ENCODE measurements at regions of chr16 and their contacts with region 1.

Region 1: DNA sequence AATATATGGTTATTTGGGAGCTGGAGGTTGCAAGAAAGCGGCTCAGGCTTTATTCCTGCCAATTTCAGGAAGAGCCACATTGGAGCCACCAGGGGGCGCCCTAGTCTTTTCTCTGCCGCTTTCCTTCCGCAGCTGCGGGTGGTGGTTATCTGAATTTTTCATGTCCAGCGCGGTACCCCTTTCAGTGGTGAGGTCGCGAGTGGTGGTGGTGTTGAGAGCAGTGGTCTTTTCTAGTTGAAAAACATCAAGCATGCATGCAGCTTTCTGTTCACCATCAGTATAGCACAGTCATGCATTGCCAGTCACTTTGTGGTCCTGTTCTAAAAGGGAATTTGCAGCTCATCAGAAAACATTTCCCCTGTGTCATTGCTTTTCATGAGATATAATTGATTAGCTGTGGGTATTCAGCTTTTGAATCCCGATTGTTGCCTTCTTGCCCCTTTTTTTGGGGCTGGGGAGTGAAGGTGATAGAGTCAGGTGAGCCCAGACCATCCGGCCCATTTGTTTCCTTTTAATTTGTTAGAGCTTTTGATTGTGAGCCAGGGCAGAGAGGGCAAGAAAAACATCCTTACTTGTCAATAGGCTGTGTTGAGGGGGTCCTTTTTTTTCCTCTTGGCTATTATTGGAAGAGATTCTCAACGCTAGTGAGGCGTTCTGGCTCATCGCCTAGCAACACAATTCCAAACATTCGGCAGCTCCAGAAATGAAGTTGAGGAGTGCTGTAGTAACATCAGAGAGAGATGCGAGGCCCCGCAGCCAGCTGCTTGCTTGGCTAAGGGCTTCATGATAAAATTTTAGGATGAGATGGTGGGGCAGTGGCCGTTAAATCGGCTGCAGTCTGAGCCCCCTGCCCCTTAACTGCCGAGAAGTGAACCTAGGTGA is 119.0 kb downstream of the SNX29 start:
- DNase-seq: peak; percentile 64
- H3K4me3 ChIP-seq: no peak overlapping the region
- H3K27ac ChIP-seq: no peak overlapping the region
- H3K4me1 ChIP-seq: peaks cover 19% of the 10 kb centered on the region
- H3K27me3 ChIP-seq: no peaks in the 10 kb centered on the region
- CTCF ChIP-seq: peak; percentile 76 to 87
- POLR2A ChIP-seq: no peak

Region 2: GRCh38 chr16:12002447-12003006 is 93.0 kb before region 1 on chr16:
- CTCF ChIA-PET with region 1: no interaction called
- POLR2A ChIA-PET with region 1: no interaction called
- dilution Hi-C with region 1: no loop called
- intact Hi-C with region 1: no loop called
- DNase-seq: no peak
- H3K4me3 ChIP-seq: no peak overlapping the region
- H3K27ac ChIP-seq: no peak overlapping the region
- H3K4me1 ChIP-seq: no peaks in the 10 kb centered on the region
- H3K27me3 ChIP-seq: no peaks in the 10 kb centered on the region
- CTCF ChIP-seq: no peak
- POLR2A ChIP-seq: no peak

Region 3: GRCh38 chr16:12079412-12079965 is 16.0 kb before region 1 on chr16:
- CTCF ChIA-PET with region 1: interaction called, 17 read pairs
- POLR2A ChIA-PET with region 1: no interaction called
- dilution Hi-C with region 1: no loop called
- intact Hi-C with region 1: no loop called
- DNase-seq: no peak
- H3K4me3 ChIP-seq: no peak overlapping the region
- H3K27ac ChIP-seq: no peak overlapping the region
- H3K4me1 ChIP-seq: peaks cover 8% of the 10 kb centered on the region
- H3K27me3 ChIP-seq: no peaks in the 10 kb centered on the region
- CTCF ChIP-seq: no peak
- POLR2A ChIP-seq: no peak

Region 4: GRCh38 chr16:12228602-12229499 is 133.3 kb after region 1 on chr16:
- CTCF ChIA-PET with region 1: interaction called, 29 read pairs
- POLR2A ChIA-PET with region 1: no interaction called
- dilution Hi-C with region 1: no loop called
- intact Hi-C with region 1: no loop called
- DNase-seq: peak; percentile 67
- H3K4me3 ChIP-seq: no peak overlapping the region
- H3K27ac ChIP-seq: no peak overlapping the region
- H3K4me1 ChIP-seq: no peaks in the 10 kb centered on the region
- H3K27me3 ChIP-seq: no peaks in the 10 kb centered on the region
- CTCF ChIP-seq: peak; percentile 64 to 93
- POLR2A ChIP-seq: no peak

Region 5: DNA sequence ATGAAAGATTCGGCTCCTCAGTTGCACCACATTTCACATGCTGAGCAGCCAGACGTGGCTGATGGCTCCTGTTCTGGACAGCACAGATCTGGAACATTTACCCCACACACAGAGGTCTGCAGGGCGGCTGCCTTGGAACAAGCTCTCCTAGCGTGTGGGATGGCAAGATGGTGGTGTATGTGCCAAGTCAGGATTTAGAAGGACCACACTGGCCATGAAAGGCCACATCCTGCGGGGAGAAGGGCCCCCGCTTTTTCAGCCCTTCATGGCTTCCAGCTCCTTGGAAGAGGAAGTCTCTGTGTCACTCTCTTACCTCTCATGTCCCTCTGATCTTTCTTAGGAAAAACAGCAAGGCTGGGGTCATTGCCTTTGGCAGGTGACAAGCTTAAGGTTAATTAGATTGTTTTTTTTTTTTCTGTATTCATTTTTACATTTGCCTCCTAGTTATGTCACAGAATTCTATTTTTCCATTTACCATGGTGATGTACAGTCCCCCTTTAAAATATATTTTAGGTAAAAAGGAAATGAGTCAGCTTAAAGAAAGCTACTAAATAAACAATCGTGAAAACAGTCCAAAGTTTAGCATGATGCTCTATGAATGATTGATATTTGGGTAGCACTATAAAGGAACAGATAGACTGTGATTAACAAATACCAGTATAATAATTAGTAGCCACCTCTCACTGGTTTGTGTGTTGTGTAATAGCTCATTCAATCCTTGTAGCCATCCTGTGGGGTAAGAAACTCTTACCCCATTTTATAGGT is 311.6 kb after region 1 on chr16:
- CTCF ChIA-PET with region 1: interaction called, 6 read pairs
- POLR2A ChIA-PET with region 1: no interaction called
- dilution Hi-C with region 1: no loop called
- intact Hi-C with region 1: loop called (anchors 2 kb)
- DNase-seq: peak; percentile 75
- H3K4me3 ChIP-seq: no peak overlapping the region
- H3K27ac ChIP-seq: peak overlapping the region; percentile 99
- H3K4me1 ChIP-seq: peaks cover 42% of the 10 kb centered on the region
- H3K27me3 ChIP-seq: no peaks in the 10 kb centered on the region
- CTCF ChIP-seq: no peak
- POLR2A ChIP-seq: peak; percentile 34

Region 6: GRCh38 chr16:12462426-12463280 is 367.1 kb after region 1 on chr16:
- CTCF ChIA-PET with region 1: no interaction called
- POLR2A ChIA-PET with region 1: no interaction called
- dilution Hi-C with region 1: no loop called
- intact Hi-C with region 1: no loop called
- DNase-seq: peak; percentile 70
- H3K4me3 ChIP-seq: no peak overlapping the region
- H3K27ac ChIP-seq: peak overlapping the region; percentile 82
- H3K4me1 ChIP-seq: peaks cover 12% of the 10 kb centered on the region
- H3K27me3 ChIP-seq: no peaks in the 10 kb centered on the region
- CTCF ChIP-seq: no peak
- POLR2A ChIP-seq: no peak

Region 7: GRCh38 chr16:12573730-12574383 is 478.3 kb after region 1 on chr16:
- CTCF ChIA-PET with region 1: interaction called, 23 read pairs
- POLR2A ChIA-PET with region 1: no interaction called
- dilution Hi-C with region 1: no loop called
- intact Hi-C with region 1: no loop called
- DNase-seq: peak; percentile 79
- H3K4me3 ChIP-seq: no peak overlapping the region
- H3K27ac ChIP-seq: no peak overlapping the region
- H3K4me1 ChIP-seq: no peaks in the 10 kb centered on the region
- H3K27me3 ChIP-seq: no peaks in the 10 kb centered on the region
- CTCF ChIP-seq: peak; percentile 78 to 81
- POLR2A ChIP-seq: no peak

Region 8: GRCh38 chr16:12819126-12820117 is 723.9 kb after region 1 on chr16:
- CTCF ChIA-PET with region 1: interaction called, 9 read pairs
- POLR2A ChIA-PET with region 1: no interaction called
- dilution Hi-C with region 1: no loop called
- intact Hi-C with region 1: loop called (anchors 1 kb)
- DNase-seq: peak; percentile 60
- H3K4me3 ChIP-seq: no peak overlapping the region
- H3K27ac ChIP-seq: no peak overlapping the region
- H3K4me1 ChIP-seq: no peaks in the 10 kb centered on the region
- H3K27me3 ChIP-seq: peaks cover 0 to 2% of the 10 kb centered on the region in 2 experiments
- CTCF ChIP-seq: peak; percentile 83 to 88
- POLR2A ChIP-seq: no peak